ENCODE measurements at regions of chr19 and their contacts with region 1.

Region 1: GRCh38 chr19:34972163-34972705 is 8.2 kb upstream of the ZNF792 start:
- DNase-seq: peak; percentile 70
- H3K4me3 ChIP-seq: no peak overlapping the region
- H3K27ac ChIP-seq: no peak overlapping the region
- H3K4me1 ChIP-seq: peaks cover 8 to 14% (median 10%) of the 10 kb centered on the region in 4 donors
- H3K27me3 ChIP-seq: peaks cover 0 to 5% (median 0%) of the 10 kb centered on the region in 4 donors
- CTCF ChIP-seq: no peak
- EP300 ChIP-seq: no peak
- POLR2A ChIP-seq: no peak

Region 2: DNA sequence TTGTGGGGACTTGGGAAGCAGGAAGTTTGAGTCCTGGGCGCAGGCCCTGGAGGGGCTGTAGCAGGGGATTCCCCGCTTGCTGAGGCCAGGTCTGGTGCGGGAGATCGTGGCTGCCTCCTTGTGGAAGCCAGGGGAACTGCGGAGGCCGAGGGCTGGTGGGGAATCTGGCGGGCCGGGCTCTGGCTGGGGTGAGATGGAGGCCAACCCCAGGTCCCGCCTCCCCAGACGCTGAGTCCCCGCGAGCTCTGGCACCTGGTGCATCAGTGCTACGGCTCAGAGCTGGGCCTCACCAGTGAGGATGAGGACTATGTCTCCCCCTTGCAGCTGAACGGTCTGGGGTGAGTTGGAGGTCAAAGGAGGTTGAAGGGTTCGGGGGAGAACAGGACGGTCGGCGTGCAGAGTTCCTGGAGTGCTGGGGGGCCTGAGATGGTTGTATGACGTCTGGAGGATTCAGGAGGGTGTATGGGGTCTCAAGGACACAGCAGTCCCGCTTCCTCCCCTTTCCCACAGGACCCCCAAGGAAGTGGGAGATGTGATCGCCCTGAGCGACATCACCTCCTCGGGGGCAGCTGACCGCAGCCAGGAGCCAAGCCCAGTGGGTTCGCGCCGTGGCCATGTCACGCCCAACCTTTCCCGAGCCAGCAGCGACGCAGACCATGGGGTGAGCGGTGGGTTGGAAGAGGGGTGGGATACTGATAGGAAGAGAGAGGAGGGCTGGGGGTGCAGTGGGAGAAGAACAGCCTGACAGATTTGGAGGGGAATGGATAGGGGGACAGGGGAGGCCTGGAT is 41.0 kb after region 1 on chr19:
- intact Hi-C with region 1: loop called (anchors 2 kb)
- DNase-seq: peak; percentile 96
- H3K4me3 ChIP-seq: no peak overlapping the region
- H3K27ac ChIP-seq: peak overlapping the region; percentile 29 to 62 (median 34)
- H3K4me1 ChIP-seq: peaks cover 27 to 53% (median 31%) of the 10 kb centered on the region in 4 donors
- H3K27me3 ChIP-seq: no peaks in the 10 kb centered on the region
- CTCF ChIP-seq: peak; percentile 97 to 99 (median 98)
- EP300 ChIP-seq: no peak
- POLR2A ChIP-seq: no peak

Region 3: GRCh38 chr19:35030257-35031071 is 58.2 kb after region 1 on chr19 and contains the start of gene SCN1B:
- intact Hi-C with region 1: no loop called
- DNase-seq: no peak
- H3K4me3 ChIP-seq: peak within 1 kb of the TSS; percentile 67 to 87 (median 70)
- H3K27ac ChIP-seq: peak within 1 kb of the TSS; percentile 60 to 71 (median 65)
- H3K4me1 ChIP-seq: peaks cover 15 to 25% (median 21%) of the 10 kb centered on the region in 4 donors
- H3K27me3 ChIP-seq: no peaks in the 10 kb centered on the region
- CTCF ChIP-seq: no peak
- EP300 ChIP-seq: no peak
- POLR2A ChIP-seq: no peak
- total RNA-seq, gene SCN1B: 8.3 to 15.7 (median 12.8) TPM

Region 4: DNA sequence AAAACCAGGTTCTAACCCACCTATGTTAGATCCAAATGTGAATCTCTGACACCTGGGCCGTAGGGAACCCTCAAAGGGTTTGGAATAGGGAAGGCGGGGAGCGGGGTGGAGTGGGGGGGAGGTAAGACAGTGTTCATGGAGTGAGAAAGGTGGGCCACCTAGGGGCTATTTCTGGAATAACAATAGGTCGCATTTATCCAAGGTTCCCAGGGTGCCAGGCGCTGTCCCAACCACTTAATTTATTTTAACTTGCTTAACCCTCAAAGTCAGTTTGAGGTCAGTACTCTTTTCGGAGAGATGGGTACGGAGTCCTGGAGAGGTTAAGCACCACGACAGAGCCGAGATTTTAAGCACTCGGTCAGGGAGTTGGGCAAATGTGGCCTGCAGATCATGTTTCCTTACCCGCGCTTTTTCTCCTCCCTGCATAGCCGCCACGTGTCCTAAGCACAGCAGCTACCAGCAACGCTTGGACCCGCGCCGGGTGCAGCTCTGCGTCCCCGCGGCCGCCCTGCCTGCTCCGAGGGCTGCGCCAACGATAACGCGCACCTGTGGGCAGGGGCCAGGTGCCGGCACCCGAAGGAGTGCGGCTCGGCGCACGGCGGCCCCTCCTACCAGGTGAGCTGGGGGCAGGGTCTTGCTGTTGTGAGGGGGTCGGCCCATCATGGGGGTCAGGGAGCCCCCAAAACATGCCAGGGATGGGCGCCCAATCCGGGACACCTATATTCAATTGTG is 118.4 kb after region 1 on chr19:
- intact Hi-C with region 1: loop called (anchors 2 kb)
- DNase-seq: no peak
- H3K4me3 ChIP-seq: peak overlapping the region in 3 of 4 donors; percentile 12 to 31 (median 19)
- H3K27ac ChIP-seq: no peak overlapping the region
- H3K4me1 ChIP-seq: peaks cover 3 to 13% (median 11%) of the 10 kb centered on the region in 4 donors
- H3K27me3 ChIP-seq: peaks cover 0 to 55% (median 10%) of the 10 kb centered on the region in 4 donors
- CTCF ChIP-seq: peak; percentile 47 to 67 (median 50)
- EP300 ChIP-seq: no peak
- POLR2A ChIP-seq: no peak

Region 5: DNA sequence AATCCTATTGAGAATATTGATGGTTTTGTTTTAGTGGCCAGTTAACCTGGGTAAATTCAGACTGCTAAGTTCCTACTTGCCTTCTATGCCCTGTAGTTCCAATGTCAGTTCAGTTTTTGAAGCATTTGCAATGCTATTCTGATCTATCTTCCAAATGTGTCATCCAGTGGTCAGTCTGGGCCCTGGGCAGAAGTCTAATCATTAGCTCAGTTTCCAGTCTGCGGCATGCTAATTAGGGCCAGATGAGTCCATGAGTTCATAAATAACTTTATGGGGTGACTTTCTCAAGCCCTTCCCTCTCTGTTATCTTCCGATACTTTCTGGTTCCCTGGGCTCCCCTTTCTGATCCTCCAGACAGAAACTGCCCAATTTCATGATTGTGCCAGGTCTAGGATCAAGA is 223.6 kb after region 1 on chr19:
- intact Hi-C with region 1: no loop called
- DNase-seq: no peak
- H3K4me3 ChIP-seq: no peak overlapping the region
- H3K27ac ChIP-seq: no peak overlapping the region
- H3K4me1 ChIP-seq: no peaks in the 10 kb centered on the region
- H3K27me3 ChIP-seq: peaks cover 0 to 20% (median 0%) of the 10 kb centered on the region in 4 donors
- CTCF ChIP-seq: no peak
- EP300 ChIP-seq: no peak
- POLR2A ChIP-seq: no peak